Uterus (tissue), 4 donors: ENCODE measurements at regions of chr11 and their contacts with region 1.

Region 1: GRCh38 chr11:2196970-2197770 is 25.6 kb upstream of the TH start:
- DNase-seq: peak; percentile 76 to 83
- H3K4me3 ChIP-seq: no peak overlapping the region
- H3K27ac ChIP-seq: no peak overlapping the region
- H3K4me1 ChIP-seq: no peaks in the 10 kb centered on the region
- H3K27me3 ChIP-seq: no peaks in the 10 kb centered on the region
- CTCF ChIP-seq: peak; percentile 87 to 98 (median 94)
- POLR2A ChIP-seq: no peak

Region 2: GRCh38 chr11:2415601-2416380 is 218.6 kb after region 1 on chr11:
- intact Hi-C with region 1: no loop called
- DNase-seq: no peak
- H3K4me3 ChIP-seq: no peak overlapping the region
- H3K27ac ChIP-seq: no peak overlapping the region
- H3K4me1 ChIP-seq: no peaks in the 10 kb centered on the region
- H3K27me3 ChIP-seq: no peaks in the 10 kb centered on the region
- CTCF ChIP-seq: no peak
- POLR2A ChIP-seq: no peak

Region 3: GRCh38 chr11:2428322-2428795 is 231.2 kb after region 1 on chr11:
- intact Hi-C with region 1: loop called (anchors 2 kb)
- DNase-seq: peak in 1 of 2 donors; percentile 50
- H3K4me3 ChIP-seq: no peak overlapping the region
- H3K27ac ChIP-seq: no peak overlapping the region
- H3K4me1 ChIP-seq: no peaks in the 10 kb centered on the region
- H3K27me3 ChIP-seq: no peaks in the 10 kb centered on the region
- CTCF ChIP-seq: peak; percentile 46 to 89 (median 73)
- POLR2A ChIP-seq: no peak